Sigmoid colon (tissue), 7 donors: ENCODE measurements at regions of chr3 and their contacts with region 1.

Region 1: GRCh38 chr3:122564155-122564912 is at the starts of genes DTX3L and PARP9:
- DNase-seq: peak; percentile 93
- H3K4me3 ChIP-seq: peak within 1 kb of the TSS; percentile 69 to 81 (median 74)
- H3K27ac ChIP-seq: peak within 1 kb of the TSS; percentile 90 to 95 (median 92)
- H3K4me1 ChIP-seq: peaks cover 0 to 65% (median 45%) of the 10 kb centered on the region in 4 donors
- H3K27me3 ChIP-seq: no peaks in the 10 kb centered on the region
- CTCF ChIP-seq: no peak
- EP300 ChIP-seq: no peak
- POLR2A ChIP-seq: peak; percentile 52 to 62
- total RNA-seq, gene DTX3L: 18.9 to 32.6 (median 25.0) TPM
- total RNA-seq, gene PARP9: 24.5 to 43.0 (median 35.3) TPM

Region 2: DNA sequence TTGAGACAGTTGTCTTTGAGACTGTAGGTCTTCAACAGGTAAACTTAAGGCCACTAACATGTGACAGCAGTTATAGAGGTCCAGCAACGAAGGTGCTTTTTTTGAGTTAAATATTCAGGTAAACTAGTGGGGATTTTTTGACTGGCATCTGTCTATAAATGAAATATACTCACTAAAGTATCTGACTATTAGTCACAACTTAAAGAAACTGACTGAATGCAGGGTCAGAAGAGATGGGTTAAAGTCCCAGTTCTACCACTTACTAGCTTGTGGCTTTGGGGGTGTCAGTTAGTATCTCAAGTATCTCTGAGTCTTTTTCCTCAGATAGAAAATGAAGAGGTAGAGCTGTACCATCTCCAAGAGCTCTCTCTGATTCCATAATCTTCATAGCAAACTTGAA is 199.3 kb before region 1 on chr3:
- intact Hi-C with region 1: no loop called
- DNase-seq: no peak
- H3K4me3 ChIP-seq: no peak overlapping the region
- H3K27ac ChIP-seq: no peak overlapping the region
- H3K4me1 ChIP-seq: no peaks in the 10 kb centered on the region
- H3K27me3 ChIP-seq: no peaks in the 10 kb centered on the region
- CTCF ChIP-seq: no peak
- EP300 ChIP-seq: no peak
- POLR2A ChIP-seq: no peak

Region 3: GRCh38 chr3:122793568-122794416 is 229.5 kb after region 1 on chr3 and contains the start of gene HSPBAP1:
- intact Hi-C with region 1: loop called (anchors 10 kb)
- DNase-seq: peak; percentile 96
- H3K4me3 ChIP-seq: peak within 1 kb of the TSS; percentile 70 to 94 (median 90)
- H3K27ac ChIP-seq: peak within 1 kb of the TSS; percentile 94 to 98 (median 98)
- H3K4me1 ChIP-seq: peaks cover 0 to 30% (median 24%) of the 10 kb centered on the region in 4 donors
- H3K27me3 ChIP-seq: no peaks in the 10 kb centered on the region
- CTCF ChIP-seq: no peak
- EP300 ChIP-seq: peak in 2 of 4 donors; percentile 18 to 43
- POLR2A ChIP-seq: peak; percentile 43 to 46
- total RNA-seq, gene HSPBAP1: 11.1 to 13.8 (median 12.6) TPM